ENCODE measurements at regions of chr15 and their contacts with region 1.

Region 1: DNA sequence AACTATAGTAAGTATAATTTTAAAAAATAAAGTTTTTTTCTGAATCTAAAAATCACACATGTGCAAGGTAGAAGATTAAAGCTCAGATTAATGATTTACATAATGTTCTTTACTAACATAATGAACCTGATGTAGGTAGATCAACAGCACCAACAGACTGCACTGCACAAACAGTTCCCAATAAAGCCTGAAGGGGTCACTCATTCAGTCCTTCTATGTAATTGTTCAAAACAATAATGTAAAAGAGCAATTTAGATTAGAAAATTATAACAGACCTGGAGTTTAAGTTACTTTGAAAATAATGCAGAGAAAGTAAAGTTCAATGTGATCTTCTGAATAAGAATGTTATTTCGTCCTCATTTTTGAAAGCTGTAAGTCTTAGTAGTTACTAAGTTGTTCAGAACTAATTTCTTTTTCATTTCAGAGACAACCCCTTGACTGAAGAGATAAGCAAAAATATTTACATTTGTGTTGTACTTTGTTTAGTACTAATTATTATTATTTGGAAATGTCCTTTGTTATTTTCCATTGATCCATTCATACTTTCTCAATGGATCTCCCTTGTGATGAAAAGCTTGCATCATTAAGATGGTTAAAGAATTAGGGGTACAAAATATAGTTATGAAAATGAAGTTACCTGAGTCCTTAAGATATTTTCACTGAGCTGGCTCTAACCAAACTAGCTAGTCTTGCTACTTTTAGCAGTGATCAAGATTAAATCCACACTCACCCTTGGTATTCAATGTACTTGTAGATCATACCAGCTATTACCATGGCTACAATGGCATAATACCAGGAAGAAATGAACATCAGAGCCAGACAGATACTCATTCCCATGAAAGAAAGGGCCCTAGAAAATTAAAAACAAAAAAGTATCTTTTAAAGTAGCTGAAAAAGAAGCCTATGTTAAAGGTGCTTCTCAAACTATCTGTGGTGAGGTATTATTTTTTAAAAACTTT is 16.8 kb downstream of the EMC4 start:
- DNase-seq: peak in 1 of 2 donors; percentile 70
- H3K4me3 ChIP-seq: no peak overlapping the region
- H3K27ac ChIP-seq: no peak overlapping the region
- H3K4me1 ChIP-seq: no peaks in the 10 kb centered on the region
- H3K27me3 ChIP-seq: no peaks in the 10 kb centered on the region
- CTCF ChIP-seq: peak in 5 of 7 experiments; percentile 57 to 77 (median 70)
- EP300 ChIP-seq: no peak
- POLR2A ChIP-seq: no peak

Region 2: GRCh38 chr15:34367101-34368081 is 125.7 kb after region 1 on chr15 and contains the start of gene LPCAT4:
- intact Hi-C with region 1: loop called (anchors 10 kb)
- DNase-seq: peak; percentile 92 to 97
- H3K4me3 ChIP-seq: peak within 1 kb of the TSS; percentile 83 to 98 (median 96)
- H3K27ac ChIP-seq: peak within 1 kb of the TSS; percentile 98 to 100 (median 99)
- H3K4me1 ChIP-seq: peaks cover 18 to 50% (median 34%) of the 10 kb centered on the region in 4 donors
- H3K27me3 ChIP-seq: no peaks in the 10 kb centered on the region
- CTCF ChIP-seq: peak in 5 of 7 experiments; percentile 88 to 96 (median 94)
- EP300 ChIP-seq: no peak
- POLR2A ChIP-seq: no peak
- total RNA-seq, gene LPCAT4: 26.1 to 206 (median 118) TPM

Measured in stomach (tissue), 19 donors.